ENCODE measurements at regions of chr1 and their contacts with region 1.

Region 1: GRCh38 chr1:36913523-36914060 is 120.7 kb downstream of the GRIK3 start:
- DNase-seq: no peak
- H3K4me3 ChIP-seq: no peak overlapping the region
- H3K27ac ChIP-seq: no peak overlapping the region
- H3K4me1 ChIP-seq: no peaks in the 10 kb centered on the region
- H3K27me3 ChIP-seq: no peaks in the 10 kb centered on the region
- CTCF ChIP-seq: no peak
- EP300 ChIP-seq: no peak
- POLR2A ChIP-seq: no peak

Region 2: GRCh38 chr1:36889478-36890226 is 23.9 kb before region 1 on chr1:
- in situ Hi-C with region 1: no loop called
- intact Hi-C with region 1: loop called (anchors 1 kb)
- DNase-seq: no peak
- H3K4me3 ChIP-seq: no peak overlapping the region
- H3K27ac ChIP-seq: no peak overlapping the region
- H3K4me1 ChIP-seq: no peaks in the 10 kb centered on the region
- H3K27me3 ChIP-seq: peaks cover 13% of the 10 kb centered on the region
- CTCF ChIP-seq: no peak
- EP300 ChIP-seq: no peak
- POLR2A ChIP-seq: no peak

Measured in transverse colon (tissue), 4 donors.